ENCODE measurements at regions of chr12 and their contacts with region 1.

Region 1: DNA sequence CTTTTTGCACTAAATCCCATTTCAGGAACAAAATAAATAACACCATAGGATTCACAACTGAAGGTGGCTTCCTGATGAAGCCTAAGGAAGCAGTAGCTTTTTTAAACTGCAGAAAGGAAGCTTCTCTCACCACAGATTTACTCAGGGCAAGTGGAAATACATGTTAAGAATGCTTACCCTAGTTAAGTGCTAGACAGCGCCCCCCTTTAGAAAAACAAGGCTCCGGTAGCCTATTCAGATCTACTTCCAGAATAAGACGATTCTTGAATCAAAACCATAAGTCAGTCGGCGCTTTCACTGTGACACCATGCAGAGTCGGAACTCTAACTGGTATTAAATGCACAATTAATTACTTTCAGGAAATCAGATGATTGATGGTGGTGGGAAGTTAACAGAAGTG is 41.9 kb downstream of the E2F7 start:
- DNase-seq: no peak
- H3K4me3 ChIP-seq: no peak overlapping the region
- H3K27ac ChIP-seq: no peak overlapping the region
- H3K4me1 ChIP-seq: no peaks in the 10 kb centered on the region
- H3K27me3 ChIP-seq: no peaks in the 10 kb centered on the region
- CTCF ChIP-seq: no peak

Region 2: DNA sequence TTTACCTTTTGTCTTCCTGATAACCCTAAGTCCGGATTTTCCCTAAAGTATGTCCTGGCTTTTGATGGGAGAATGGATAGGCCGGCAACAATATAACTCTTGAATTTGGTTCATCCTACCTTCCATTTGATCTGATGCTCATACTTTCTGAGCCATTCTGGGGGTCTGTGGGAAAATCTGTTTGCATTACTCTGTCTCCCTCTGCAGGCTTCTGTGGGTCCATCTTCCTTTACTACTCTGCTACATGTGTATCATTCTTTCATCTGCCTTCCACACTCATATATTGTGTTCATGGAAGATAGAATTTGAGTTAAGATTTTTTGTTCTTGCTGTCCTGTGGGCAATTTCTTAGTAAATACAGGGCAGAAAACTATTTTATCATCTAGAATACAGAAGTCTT is 908.7 kb after region 1 on chr12:
- CTCF ChIA-PET with region 1: interaction called, 12 read pairs
- POLR2A ChIA-PET with region 1: no interaction called
- intact Hi-C with region 1: no loop called
- DNase-seq: no peak
- H3K4me3 ChIP-seq: no peak overlapping the region
- H3K27ac ChIP-seq: no peak overlapping the region
- H3K4me1 ChIP-seq: no peaks in the 10 kb centered on the region
- H3K27me3 ChIP-seq: no peaks in the 10 kb centered on the region
- CTCF ChIP-seq: no peak